ENCODE measurements at regions of chr1 and their contacts with region 1.

Region 1: GRCh38 chr1:181479137-181479745 is 4.1 kb upstream of the CACNA1E start:
- DNase-seq: no peak
- H3K4me3 ChIP-seq: no peak overlapping the region
- H3K27ac ChIP-seq: no peak overlapping the region
- H3K4me1 ChIP-seq: no peaks in the 10 kb centered on the region
- H3K27me3 ChIP-seq: peaks cover 24% of the 10 kb centered on the region
- CTCF ChIP-seq: peak; percentile 71

Region 2: GRCh38 chr1:181514298-181515290 is 35.4 kb after region 1 on chr1:
- intact Hi-C with region 1: no loop called
- DNase-seq: no peak
- H3K4me3 ChIP-seq: no peak overlapping the region
- H3K27ac ChIP-seq: no peak overlapping the region
- H3K4me1 ChIP-seq: no peaks in the 10 kb centered on the region
- H3K27me3 ChIP-seq: no peaks in the 10 kb centered on the region
- CTCF ChIP-seq: no peak

Region 3: DNA sequence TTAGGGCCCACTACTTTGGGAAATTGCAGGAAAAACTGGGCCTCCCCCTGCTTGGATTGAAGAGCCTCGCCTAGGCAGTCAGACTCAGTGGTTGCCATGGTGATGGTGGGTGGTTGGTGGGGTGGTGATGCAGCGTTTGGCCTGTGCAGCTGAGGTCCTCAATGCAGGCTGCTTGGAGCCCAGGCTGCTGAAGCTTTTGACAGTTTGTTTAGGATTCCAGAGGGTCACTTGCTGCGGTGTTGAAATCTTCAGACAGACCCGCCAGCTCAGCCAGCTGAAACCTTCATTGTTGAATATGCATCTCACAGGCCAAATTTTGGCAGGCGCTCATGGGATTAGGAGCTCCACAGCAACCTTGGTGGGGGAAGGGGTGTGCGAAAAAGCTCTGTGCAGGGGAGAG is 72.0 kb after region 1 on chr1:
- intact Hi-C with region 1: no loop called
- DNase-seq: peak; percentile 37
- H3K4me3 ChIP-seq: no peak overlapping the region
- H3K27ac ChIP-seq: no peak overlapping the region
- H3K4me1 ChIP-seq: no peaks in the 10 kb centered on the region
- H3K27me3 ChIP-seq: no peaks in the 10 kb centered on the region
- CTCF ChIP-seq: no peak

Region 4: GRCh38 chr1:181676269-181676668 is 197.0 kb after region 1 on chr1:
- intact Hi-C with region 1: loop called (anchors 2 kb)
- DNase-seq: peak; percentile 51
- H3K4me3 ChIP-seq: no peak overlapping the region
- H3K27ac ChIP-seq: no peak overlapping the region
- H3K4me1 ChIP-seq: no peaks in the 10 kb centered on the region
- H3K27me3 ChIP-seq: no peaks in the 10 kb centered on the region
- CTCF ChIP-seq: peak; percentile 36

Region 5: DNA sequence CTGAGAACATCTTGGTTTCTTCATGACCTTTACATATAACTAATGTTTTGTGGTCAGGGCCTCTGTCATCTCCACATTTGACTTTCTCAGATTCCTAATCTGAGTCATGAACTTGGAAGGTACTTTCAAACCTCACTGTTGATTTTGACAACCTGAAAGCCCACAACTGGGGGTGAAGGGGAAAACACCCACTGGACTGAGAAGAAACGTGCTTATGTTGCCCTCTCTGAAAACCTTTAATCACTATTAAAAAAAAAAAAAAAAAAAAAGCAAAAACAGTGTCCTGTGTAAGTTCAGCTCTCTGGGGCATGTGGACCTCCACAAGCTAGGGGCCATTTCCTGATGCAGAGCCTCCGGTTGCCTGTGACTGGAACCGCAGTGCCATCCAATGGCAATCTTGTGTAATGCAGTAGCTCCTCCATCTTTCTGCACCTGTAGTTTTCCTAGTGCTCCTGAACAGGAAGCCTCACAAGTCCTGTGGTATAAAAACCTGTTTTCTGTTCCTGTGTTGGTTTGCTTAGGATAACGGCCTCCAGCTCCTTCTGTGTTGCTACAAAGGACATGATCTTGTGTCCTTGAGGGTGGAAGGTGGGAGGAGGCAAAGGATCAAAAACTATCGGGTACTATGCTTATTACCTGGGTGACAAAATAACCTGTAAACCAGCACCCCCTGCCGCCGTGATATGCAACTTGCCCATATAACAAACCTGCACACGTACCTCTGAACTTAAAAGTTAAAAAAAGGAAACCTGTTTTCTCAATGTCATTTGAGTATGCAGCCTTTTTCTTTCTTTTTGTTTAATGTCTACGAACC is 457.7 kb after region 1 on chr1:
- intact Hi-C with region 1: loop called (anchors 2 kb)
- DNase-seq: peak; percentile 52
- H3K4me3 ChIP-seq: no peak overlapping the region
- H3K27ac ChIP-seq: no peak overlapping the region
- H3K4me1 ChIP-seq: no peaks in the 10 kb centered on the region
- H3K27me3 ChIP-seq: no peaks in the 10 kb centered on the region
- CTCF ChIP-seq: peak; percentile 26

Region 6: DNA sequence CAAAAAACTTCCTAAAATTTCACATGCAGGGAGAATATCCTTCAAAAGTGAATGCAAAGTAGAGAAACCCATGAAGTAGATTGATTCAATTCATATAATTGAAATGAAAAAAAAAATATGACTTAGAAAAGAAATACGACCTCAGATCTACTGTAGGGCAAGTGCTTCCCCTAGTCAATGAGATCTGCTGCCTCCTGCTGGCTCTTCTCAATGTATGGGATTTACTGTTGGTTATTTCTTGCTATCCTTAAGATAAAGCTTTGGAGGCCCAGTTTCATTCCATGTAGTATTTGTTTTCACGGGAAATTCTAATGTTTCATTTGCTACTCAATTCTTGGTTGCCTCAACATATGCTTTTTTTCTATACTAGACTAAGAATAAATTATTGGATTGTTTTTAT is 536.1 kb after region 1 on chr1:
- intact Hi-C with region 1: no loop called
- DNase-seq: no peak
- H3K4me3 ChIP-seq: no peak overlapping the region
- H3K27ac ChIP-seq: no peak overlapping the region
- H3K4me1 ChIP-seq: no peaks in the 10 kb centered on the region
- H3K27me3 ChIP-seq: no peaks in the 10 kb centered on the region
- CTCF ChIP-seq: no peak

Region 7: DNA sequence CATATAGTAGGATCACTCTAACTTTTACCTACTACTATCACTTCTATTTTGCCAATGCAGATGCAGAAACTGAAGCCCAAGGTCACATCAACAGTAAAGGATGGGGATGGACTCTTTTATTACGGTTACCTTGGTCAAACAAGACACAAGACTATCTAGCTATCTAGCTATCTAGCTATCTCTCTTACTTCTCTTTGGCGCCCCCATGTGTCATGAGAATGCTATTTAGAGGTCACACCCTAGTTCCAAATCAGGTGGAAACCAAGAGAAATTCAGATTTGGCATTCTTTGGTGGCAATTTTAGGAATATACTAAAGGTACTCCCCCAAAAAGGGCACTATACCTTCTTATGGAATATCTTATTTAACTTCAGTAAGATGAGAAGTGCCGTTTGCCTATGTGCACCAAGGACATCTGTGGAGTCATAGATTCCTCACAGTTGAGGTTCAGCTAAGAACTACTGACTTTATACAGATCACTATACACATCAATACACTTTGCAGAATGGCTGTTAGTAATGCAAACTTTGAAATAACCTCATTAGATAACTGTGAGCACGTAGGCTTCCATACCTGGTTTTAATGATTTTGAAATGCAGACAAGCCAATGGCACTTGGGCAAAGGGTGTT is 575.6 kb after region 1 on chr1:
- intact Hi-C with region 1: loop called (anchors 10 kb)
- DNase-seq: peak; percentile 73
- H3K4me3 ChIP-seq: no peak overlapping the region
- H3K27ac ChIP-seq: no peak overlapping the region
- H3K4me1 ChIP-seq: no peaks in the 10 kb centered on the region
- H3K27me3 ChIP-seq: no peaks in the 10 kb centered on the region
- CTCF ChIP-seq: peak; percentile 37

Measured in colonic mucosa (tissue), 4 donors.